Activated CD4-positive, alpha-beta T cell treated with anti-CD3 and anti-CD28 coated beads for 36 hours (primary cell): ENCODE measurements at regions of chr11 and their contacts with region 1.

Region 1: GRCh38 chr11:10750838-10751580 is at the start of gene CTR9:
- DNase-seq: peak; percentile 97
- ATAC-seq: peak; percentile 92
- H3K4me3 Mint-ChIP-seq: peak within 1 kb of the TSS; percentile 96
- H3K27ac Mint-ChIP-seq: peak within 1 kb of the TSS; percentile 92
- H3K4me1 Mint-ChIP-seq: peaks cover 16% of the 10 kb centered on the region
- H3K27me3 Mint-ChIP-seq: no peaks in the 10 kb centered on the region
- total RNA-seq, gene CTR9: 39.7 to 43.9 TPM

Region 2: DNA sequence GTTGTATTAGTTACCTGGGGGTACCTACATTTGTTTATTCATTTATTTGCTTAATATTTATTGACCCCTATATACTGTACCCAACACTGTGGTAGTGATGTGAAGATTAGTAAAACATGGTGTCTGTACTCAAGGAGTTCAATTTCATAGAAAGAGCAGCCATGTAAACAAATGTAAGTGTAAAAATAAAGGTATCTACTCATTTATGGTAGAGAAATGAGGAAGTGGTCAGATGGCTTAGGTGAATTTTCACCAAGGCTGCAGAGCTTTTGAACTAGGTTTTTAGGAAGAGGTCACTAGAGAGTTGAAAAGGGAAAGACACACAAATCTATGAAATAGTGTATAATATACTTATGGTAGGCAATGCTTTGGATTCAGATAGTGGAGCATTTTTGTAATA is 11.2 kb after region 1 on chr11:
- CTCF ChIA-PET with region 1: interaction called, 13 read pairs
- POLR2A ChIA-PET with region 1: no interaction called
- intact Hi-C with region 1: no loop called
- DNase-seq: no peak
- ATAC-seq: no peak
- H3K4me3 Mint-ChIP-seq: no peak overlapping the region
- H3K27ac Mint-ChIP-seq: no peak overlapping the region
- H3K4me1 Mint-ChIP-seq: no peaks in the 10 kb centered on the region
- H3K27me3 Mint-ChIP-seq: no peaks in the 10 kb centered on the region

Region 3: DNA sequence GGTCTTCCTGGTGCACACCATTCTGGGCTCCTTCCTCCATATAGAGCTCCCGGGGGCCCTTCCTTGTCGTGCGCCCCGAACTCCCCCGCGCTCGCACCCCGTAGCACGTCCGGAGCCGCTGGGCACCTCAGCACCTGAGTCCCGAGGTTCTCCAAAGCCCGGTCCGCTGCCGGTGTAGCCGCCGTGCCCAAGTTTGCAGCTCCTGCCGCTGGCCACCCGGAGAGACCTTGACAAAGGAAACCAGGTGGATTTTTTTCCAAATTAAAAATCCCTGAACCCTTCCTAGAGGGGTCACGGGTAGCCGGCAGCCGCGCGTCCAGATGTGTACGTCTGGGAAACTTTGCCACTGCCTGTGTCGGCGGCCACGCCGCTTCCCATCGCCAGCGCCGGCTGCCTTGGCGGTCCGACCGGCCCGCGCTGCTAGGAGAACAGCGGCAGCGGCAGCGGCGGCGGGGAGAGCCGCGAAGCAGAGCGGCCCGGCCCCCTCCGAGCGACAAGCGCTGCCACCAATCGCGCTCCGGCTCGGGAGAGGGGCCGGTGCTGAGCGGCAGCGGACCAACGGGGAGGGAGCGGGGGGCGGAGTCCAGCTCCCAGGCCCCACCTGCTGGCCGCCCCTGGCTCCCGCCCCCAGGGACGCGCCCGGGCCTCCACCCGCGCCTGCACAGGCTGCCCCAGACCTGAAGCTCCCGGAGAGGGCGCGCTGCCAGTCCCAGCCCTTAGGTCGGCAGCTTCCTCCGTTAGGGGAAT is 870.7 kb after region 1 on chr11 and contains the start of gene GALNT18:
- CTCF ChIA-PET with region 1: no interaction called
- POLR2A ChIA-PET with region 1: no interaction called
- intact Hi-C with region 1: loop called in 1 of 2 experiments (anchors 5 kb)
- DNase-seq: peak; percentile 94
- ATAC-seq: peak; percentile 99
- H3K4me3 Mint-ChIP-seq: peak within 1 kb of the TSS; percentile 80
- H3K27ac Mint-ChIP-seq: peak within 1 kb of the TSS; percentile 63
- H3K4me1 Mint-ChIP-seq: peaks cover 5% of the 10 kb centered on the region
- H3K27me3 Mint-ChIP-seq: peaks cover 37% of the 10 kb centered on the region
- total RNA-seq, gene GALNT18: 6.9 to 8.8 TPM